ENCODE measurements at regions of chr10 and their contacts with region 1.

Region 1: DNA sequence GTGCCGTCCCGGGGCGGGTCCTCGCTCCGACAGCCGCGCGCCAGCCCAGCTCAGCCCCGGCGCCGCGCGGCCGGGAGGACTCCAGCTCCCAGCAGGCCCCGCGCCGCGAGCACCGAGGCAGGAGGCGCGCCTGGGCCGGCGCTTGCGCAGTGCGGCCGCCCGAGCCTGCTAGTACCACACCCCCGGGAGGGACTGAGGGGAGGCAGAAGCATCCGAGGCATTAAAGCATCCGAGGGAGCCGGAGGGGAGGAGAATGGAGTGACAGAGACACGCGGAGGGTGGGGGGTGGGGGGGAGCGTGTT is at the start of gene GRK5:
- DNase-seq: peak; percentile 98
- total RNA-seq, gene GRK5: 17.6 TPM

Region 2: GRCh38 chr10:119041326-119041725 is 166.0 kb before region 1 on chr10:
- intact Hi-C with region 1: no loop called
- DNase-seq: no peak

Region 3: DNA sequence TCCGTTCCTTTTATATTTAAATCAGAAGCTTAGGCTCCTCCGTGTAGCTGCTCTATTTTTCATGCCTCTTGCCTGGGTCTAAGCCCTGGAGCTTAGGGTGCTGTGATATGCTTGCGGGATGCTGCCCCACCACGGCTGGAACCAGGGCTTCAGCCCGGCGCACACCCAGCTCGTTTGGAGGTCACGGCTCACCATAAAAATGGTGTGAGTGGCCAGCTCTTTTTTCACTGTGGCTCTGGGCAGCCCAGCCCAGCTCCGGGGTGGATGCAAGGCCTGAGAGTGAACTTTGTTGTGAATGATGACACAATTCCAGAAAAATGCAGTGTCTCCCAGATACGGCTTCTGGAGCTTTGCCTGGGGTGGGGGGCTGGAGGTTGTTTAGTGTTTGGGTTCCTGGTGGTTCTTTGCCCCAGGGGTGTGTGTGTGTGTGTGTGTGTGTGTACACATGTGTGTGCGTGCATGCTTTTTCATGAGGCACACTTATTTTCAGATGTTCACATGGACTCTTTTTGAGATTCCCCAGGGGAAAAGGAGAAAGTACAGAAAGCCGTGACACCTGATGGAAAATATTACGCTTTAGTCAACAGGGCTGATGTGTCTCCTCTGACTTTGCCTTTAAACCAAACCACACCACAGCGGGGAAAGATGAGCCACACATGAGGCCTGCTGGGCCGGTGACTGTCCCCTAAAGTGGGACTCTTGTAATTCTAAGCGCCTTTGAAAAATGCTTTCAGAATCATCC is 46.3 kb after region 1 on chr10:
- intact Hi-C with region 1: loop called (anchors 5 kb)
- DNase-seq: no peak

Region 4: DNA sequence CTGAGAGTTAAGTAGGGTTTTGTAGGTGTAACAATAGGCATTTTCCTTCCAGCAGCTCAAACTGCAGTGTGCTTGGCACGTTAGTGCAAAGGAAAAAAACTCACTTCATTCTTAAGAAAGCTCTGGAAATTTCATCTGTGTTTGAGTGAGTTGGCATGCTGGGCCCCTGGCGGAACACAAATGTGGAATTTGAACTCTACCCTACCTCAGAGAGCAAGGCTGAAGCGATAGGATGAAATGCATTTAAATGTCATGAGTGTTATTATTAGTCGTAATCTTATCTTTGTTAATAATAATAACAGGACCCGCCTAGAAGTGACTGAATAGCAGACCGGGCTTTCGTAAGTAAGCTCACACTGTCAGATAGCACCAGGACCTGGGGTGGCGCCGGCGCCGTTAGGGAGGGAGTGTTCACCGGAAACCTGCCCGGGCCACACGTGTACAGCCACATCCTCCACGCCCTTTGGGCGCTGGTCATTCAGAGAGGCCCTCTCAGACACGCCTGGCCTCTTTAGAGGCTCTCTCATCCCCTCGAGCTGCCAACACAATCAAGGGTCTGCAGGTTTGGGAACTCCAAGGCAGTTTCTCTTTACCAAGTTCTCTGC is 63.5 kb after region 1 on chr10:
- intact Hi-C with region 1: loop called (anchors 2 kb)
- DNase-seq: peak; percentile 93

Region 5: DNA sequence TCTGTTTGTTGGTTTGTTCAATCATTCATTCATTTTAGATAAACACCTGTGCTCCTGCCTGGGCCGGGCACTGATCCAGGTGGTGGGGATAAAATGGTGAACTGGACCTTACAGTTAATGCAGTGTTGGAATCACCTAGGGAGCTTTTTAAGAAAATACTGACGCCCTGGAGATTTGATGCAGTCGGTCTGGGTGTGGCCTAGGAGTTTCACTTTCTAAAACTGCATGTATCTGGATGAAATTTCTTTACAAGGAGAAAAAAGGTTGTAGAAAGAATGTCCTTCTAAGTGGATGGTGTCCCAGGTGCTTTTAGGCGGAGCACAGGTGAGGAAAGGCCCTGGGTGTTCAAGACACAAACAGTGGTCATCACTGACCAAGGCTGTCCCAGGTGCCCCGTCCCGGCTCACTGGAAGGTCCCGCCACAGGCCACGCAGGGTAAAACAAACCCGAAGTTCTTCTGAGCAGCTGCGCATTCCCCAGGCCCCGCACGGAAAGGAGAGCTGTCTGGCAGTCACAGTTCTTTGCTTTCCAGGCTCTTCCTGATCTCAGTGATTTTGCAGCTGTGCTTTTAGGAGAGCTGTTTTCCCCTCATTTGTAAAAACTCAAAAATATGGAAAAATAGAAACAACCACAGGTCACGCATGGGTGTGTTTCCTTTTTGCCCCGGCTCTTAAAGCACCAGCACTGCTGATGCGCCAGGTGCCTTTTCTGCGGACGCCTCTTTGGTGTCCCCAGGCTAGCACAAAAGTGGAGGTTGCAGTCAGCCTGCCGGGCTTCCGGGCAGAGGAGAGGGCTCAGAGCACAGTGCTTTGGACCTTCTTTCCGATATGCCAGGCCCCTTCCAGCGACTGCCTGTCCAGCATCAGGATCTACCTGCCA is 161.9 kb after region 1 on chr10:
- intact Hi-C with region 1: loop called (anchors 5 kb)
- DNase-seq: no peak

Region 6: DNA sequence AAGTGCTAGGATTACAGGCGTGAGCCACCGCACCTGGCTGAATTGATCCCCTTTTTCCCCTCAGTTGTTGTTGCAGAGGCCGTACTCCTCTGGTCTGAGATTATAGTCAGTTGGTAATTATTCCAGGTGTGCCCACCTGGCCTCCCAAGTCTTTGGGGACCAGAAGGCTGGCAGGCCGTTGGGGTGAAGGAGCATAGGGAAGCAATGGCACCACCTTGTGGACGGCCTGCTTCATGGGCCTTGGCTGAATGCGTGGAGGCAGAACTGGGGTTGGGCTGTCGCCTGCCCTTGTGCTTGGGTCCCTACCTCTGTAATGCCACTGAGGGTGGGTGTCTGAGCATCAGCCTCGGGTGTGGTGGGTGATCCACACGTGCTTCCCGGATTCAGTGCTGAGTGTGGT is 209.5 kb after region 1 on chr10:
- intact Hi-C with region 1: loop called (anchors 1 kb)
- DNase-seq: peak; percentile 84

Region 7: DNA sequence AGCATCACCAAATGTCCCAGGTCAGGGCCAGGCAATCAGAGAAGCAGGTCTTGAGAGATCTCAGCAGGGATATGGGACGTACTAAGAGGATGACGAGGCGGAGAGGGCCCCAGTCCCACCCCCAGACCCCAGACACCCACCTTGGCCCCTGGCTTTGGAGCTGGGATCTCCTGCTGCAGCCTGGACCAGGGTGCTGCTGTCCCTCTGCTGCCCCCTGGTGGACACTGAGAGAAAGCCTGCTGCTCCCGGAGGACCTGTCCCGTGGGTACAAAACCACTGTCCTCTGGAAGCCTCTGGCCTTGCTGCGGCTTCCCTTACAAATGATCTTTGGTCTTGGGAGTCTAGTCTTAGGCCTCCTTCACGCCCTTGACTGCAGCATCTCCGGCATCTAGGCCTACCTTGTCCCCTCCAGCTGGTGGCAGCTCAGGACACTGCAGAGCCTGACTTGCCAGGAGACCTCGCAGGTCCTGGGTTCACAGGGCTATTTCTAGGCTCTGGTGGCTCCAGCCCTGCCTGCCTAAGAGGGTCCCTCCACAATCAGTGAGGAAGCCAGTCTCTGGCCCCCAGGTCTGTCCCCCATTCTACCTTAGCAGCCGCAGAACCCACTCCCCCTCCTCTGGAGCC is 238.1 kb after region 1 on chr10:
- intact Hi-C with region 1: loop called (anchors 2 kb)
- DNase-seq: peak; percentile 95

Region 8: DNA sequence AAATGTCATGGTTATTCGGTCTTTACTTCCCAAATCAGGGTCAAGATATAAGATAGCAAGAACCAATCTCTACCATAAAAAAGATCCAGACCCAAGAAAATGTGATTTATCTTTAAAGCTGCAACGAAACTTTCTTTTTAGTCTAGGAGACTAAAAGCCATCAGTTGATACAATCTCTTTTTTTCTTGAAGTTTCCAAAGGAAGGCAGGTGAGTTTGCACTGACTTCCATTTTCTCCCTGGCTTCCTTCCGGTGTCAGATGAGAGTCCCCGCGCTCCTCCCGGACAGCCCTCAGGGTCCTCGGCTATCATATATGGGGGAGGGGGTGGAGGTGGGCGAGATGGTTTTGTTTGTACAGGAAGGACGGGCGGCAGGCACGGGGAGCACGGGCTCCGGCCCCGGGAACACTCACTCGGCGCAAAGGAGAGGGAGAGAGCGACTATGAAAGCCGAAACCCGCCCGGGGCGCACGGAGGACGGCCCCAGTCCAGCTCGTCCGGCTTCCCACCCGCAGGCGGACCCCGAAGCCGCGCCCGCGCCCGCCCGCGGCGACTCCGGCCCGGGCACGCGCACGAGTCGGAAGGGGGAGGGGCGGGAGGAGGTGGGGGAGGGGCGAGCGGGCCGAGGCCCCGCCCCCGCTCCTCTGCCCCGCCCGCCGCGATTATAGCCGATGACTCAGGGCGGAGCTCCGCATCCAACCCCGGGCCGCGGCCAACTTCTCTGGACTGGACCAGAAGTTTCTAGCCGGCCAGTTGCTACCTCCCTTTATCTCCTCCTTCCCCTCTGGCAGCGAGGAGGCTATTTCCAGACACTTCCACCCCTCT is 443.6 kb after region 1 on chr10 and contains the start of gene BAG3:
- intact Hi-C with region 1: loop called (anchors 10 kb)
- DNase-seq: peak; percentile 98
- total RNA-seq, gene BAG3: 172 TPM